CD8-positive, alpha-beta T cell (primary cell): ENCODE measurements at regions of chr7 and their contacts with region 1.

Region 1: DNA sequence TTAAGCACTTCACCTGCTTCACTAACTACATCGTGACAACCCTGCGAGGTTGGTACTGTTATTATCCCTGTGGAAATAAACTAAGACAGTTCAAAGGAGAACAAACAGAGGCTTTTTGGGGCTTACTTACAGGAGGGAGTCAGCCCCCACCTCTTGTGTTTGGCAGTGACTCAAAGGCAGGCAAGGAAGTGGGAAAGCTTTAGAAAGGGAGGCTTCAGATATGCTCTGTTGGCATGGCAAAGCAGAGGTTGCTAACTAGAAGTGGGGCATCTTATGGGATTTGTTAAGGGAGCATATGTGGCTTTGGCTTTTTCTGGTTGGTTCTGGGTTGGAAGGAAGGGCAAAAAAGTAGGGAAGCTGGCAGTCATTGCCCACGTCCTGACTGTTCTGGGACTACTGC is 84.8 kb upstream of the AOAH start:
- DNase-seq: peak in 1 of 9 experiments; percentile 26
- ATAC-seq: peak; percentile 44
- H3K4me3 ChIP-seq: no peak overlapping the region
- H3K4me3 Mint-ChIP-seq: no peak overlapping the region
- H3K27ac ChIP-seq: no peak overlapping the region
- H3K27ac Mint-ChIP-seq: no peak overlapping the region
- H3K4me1 ChIP-seq: peaks cover 7% of the 10 kb centered on the region
- H3K4me1 Mint-ChIP-seq: peaks cover 23% of the 10 kb centered on the region
- H3K27me3 ChIP-seq: no peaks in the 10 kb centered on the region
- H3K27me3 Mint-ChIP-seq: no peaks in the 10 kb centered on the region
- CTCF ChIP-seq: no peak

Region 2: DNA sequence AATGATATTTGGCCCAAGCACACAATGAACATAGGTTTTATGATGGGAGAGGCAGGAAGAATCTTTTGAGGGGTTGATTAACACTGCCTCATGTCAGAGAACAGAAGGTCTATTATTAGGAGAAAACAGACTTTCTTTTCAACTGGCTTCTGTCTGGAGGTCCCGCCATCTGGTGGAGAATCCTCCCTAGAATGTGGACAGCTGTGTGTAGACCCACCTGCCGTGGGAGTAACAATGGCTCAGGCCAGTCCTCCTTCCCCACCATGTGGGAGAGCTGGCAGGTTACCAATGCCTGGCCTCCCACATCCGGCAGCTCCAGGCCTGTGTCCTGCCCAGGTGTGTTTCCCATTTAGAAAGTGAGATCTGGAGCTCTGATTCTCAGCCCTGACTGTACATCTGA is 14.4 kb before region 1 on chr7:
- CTCF ChIA-PET with region 1: interaction called, 3 read pairs
- POLR2A ChIA-PET with region 1: interaction called, 3 read pairs
- intact Hi-C with region 1: loop called in 1 of 2 experiments (anchors 2 kb)
- DNase-seq: peak in 2 of 9 experiments; percentile 32 to 42
- ATAC-seq: no peak
- H3K4me3 ChIP-seq: no peak overlapping the region
- H3K4me3 Mint-ChIP-seq: no peak overlapping the region
- H3K27ac ChIP-seq: no peak overlapping the region
- H3K27ac Mint-ChIP-seq: peak overlapping the region; percentile 2
- H3K4me1 ChIP-seq: peaks cover 23% of the 10 kb centered on the region
- H3K4me1 Mint-ChIP-seq: peaks cover 58% of the 10 kb centered on the region
- H3K27me3 ChIP-seq: no peaks in the 10 kb centered on the region
- H3K27me3 Mint-ChIP-seq: no peaks in the 10 kb centered on the region
- CTCF ChIP-seq: no peak